ENCODE measurements at regions of chr16 and their contacts with region 1.

Region 1: DNA sequence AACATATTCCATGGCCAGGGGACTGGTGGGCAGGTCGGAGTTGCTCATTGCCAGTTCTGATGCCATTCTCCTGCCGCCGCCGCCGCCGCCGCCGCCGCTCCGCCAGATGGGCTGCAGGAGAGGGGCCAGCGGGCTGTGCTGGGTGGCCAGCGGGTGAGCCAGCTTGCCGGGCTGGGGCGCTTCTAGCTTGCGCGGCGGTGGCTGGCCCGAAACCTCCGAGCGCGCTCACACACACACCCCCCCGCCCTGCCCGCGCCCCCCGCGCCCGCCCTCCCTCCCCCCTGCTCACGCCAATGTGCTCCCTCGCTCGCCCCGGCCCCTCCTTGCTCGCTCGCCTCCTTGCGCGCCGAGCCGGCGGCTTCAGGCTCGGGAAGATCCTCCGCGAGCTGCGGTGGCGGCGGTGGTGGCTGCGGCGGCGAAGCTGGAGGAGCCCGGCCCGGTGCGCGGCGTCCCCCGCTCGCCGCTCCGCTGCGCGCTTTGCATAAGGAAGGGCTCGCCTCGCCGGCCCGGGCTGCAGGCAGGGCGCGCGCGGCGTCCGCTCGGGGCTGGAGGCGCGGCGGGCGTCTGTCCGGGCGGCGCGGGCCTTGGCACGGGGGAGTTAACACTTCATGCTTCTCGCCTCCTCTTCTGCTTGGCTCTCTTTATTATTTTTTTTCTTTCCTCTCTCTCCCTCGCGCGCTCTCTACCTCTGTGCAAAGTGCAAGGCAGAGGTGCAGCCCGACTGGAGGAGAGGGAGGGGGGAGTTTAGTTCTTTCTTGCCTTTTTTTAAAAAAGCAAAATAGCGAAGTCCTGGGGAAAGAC is 500 bp downstream of the MAF start:
- DNase-seq: peak; percentile 30 to 66
- ATAC-seq: peak; percentile 59

Region 2: GRCh38 chr16:78503602-78504001 is 1096.4 kb before region 1 on chr16:
- intact Hi-C with region 1: loop called in 1 of 2 experiments (anchors 10 kb)
- DNase-seq: peak in 1 of 2 donors; percentile 21
- ATAC-seq: peak; percentile 51

Measured in left colon (tissue), 2 donors.